Sigmoid colon (tissue), 7 donors: ENCODE measurements at regions of chr2 and their contacts with region 1.

Region 1: DNA sequence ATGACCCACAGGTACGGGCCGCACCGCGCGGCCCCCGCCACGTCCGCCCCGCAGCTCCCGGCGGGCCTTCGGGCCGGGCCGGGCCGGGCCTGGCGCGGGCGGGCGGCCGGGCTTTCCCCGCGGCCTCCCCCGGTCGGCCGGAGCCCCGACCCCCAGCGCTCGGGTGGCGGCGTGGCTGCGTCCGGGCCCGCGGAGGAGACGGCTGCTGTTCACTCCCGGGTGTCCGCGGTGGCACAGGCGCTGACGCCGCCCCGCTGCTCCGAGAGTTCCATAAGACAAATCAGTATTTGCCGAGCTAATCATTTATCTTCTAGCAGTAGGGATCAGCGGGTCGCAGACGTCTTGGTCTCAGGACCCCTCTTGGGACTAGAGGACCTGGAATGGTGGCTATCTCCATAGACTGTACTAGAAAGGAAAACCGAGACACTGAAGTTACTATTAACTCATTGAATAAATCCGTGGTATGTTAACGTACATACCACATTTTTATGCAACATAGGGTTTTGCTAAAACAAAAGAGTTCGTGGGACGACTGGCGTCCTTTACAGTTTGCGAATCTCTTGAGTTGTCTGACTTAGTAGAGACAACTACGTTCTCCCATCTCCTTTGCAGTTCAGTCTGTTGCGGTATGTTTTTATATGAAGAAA is 437 bp downstream of the LIMS1 start:
- DNase-seq: peak; percentile 75
- H3K4me3 ChIP-seq: peak overlapping the region; percentile 53 to 89 (median 76)
- H3K27ac ChIP-seq: peak overlapping the region; percentile 93 to 99 (median 96)
- H3K4me1 ChIP-seq: peaks cover 0 to 43% (median 35%) of the 10 kb centered on the region in 4 donors
- H3K27me3 ChIP-seq: no peaks in the 10 kb centered on the region
- CTCF ChIP-seq: no peak
- EP300 ChIP-seq: no peak
- POLR2A ChIP-seq: no peak

Region 2: GRCh38 chr2:108385411-108386071 is 149.2 kb before region 1 on chr2:
- intact Hi-C with region 1: no loop called
- DNase-seq: no peak
- H3K4me3 ChIP-seq: no peak overlapping the region
- H3K27ac ChIP-seq: no peak overlapping the region
- H3K4me1 ChIP-seq: no peaks in the 10 kb centered on the region
- H3K27me3 ChIP-seq: no peaks in the 10 kb centered on the region
- CTCF ChIP-seq: no peak
- EP300 ChIP-seq: no peak
- POLR2A ChIP-seq: no peak

Region 3: GRCh38 chr2:108448678-108449493 is 85.8 kb before region 1 on chr2 and contains the start of gene GCC2:
- intact Hi-C with region 1: loop called (anchors 5 kb)
- DNase-seq: peak; percentile 97
- H3K4me3 ChIP-seq: peak within 1 kb of the TSS; percentile 70 to 95 (median 84)
- H3K27ac ChIP-seq: peak within 1 kb of the TSS; percentile 86 to 92 (median 90)
- H3K4me1 ChIP-seq: peaks cover 0 to 18% (median 14%) of the 10 kb centered on the region in 4 donors
- H3K27me3 ChIP-seq: no peaks in the 10 kb centered on the region
- CTCF ChIP-seq: no peak
- EP300 ChIP-seq: peak in 1 of 4 donors; percentile 40
- POLR2A ChIP-seq: peak; percentile 69 to 79
- total RNA-seq, gene GCC2: 29.6 to 47.1 (median 37.2) TPM